Activated T-helper 2 cell treated with anti-CD3 and anti-CD28 coated beads, Interferon-gamma antibody, Interleukin-2, Interleukin-4, amounts not matched to agents 10 μg/mL and 5 μg/mL and 100 μg/mL, durations not matched to agents 14 hours and 24 hours and 36 hours (primary cell): ENCODE measurements at regions of chr7 and their contacts with region 1.

Region 1: GRCh38 chr7:102464577-102465280 is at the starts of genes ALKBH4 and LRWD1:
- DNase-seq: peak; percentile 92
- H3K4me3 Mint-ChIP-seq: peak within 1 kb of the TSS; percentile 90
- H3K27ac Mint-ChIP-seq: peak within 1 kb of the TSS; percentile 83
- H3K4me1 Mint-ChIP-seq: peaks cover 21% of the 10 kb centered on the region
- H3K27me3 Mint-ChIP-seq: no peaks in the 10 kb centered on the region
- total RNA-seq, gene ALKBH4: 8.9 and 10.0 TPM in 2 replicates
- total RNA-seq, gene LRWD1: 21.8 and 22.0 TPM in 2 replicates

Region 2: GRCh38 chr7:102396027-102397019 is 68.4 kb before region 1 on chr7 and contains the start of gene PRKRIP1:
- intact Hi-C with region 1: loop called (anchors 5 kb)
- DNase-seq: peak; percentile 80
- H3K4me3 Mint-ChIP-seq: peak within 1 kb of the TSS; percentile 92
- H3K27ac Mint-ChIP-seq: peak within 1 kb of the TSS; percentile 82
- H3K4me1 Mint-ChIP-seq: peaks cover 14% of the 10 kb centered on the region
- H3K27me3 Mint-ChIP-seq: no peaks in the 10 kb centered on the region
- total RNA-seq, gene PRKRIP1: 25.7 and 30.0 TPM in 2 replicates

Region 3: DNA sequence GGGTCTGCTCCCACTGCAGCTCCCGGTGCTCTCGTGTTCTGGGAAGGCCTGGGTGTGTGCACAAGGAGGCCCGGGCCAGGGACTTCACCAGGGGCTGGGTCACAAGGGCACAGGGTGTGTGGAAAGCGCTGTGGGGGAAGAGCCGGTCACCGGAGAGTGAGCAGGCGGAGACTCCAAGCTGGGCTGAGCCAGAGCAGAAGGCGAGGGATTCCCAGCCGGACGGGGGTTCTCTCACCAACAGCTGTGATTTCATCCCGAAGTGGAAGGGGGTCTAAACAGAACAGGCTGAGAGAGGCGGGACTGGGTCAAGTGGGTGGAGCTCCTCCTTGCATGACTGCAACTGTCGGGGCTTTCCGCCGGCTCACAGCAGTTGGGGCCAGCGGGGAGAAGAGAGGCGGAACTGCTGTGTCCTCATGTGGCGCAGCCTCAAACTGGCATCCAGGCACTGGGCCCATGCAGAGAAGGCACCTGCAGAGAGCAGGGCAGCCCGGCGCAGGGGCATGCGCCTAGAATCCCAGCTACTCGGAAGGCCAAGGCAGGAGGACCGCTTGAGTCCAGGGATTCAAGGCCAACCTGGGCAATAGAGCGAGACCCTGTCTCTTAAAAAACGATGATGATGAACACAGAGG is 39.0 kb before region 1 on chr7:
- intact Hi-C with region 1: loop called (anchors 1 kb)
- DNase-seq: peak; percentile 79
- H3K4me3 Mint-ChIP-seq: peak overlapping the region; percentile 68
- H3K27ac Mint-ChIP-seq: peak overlapping the region; percentile 100
- H3K4me1 Mint-ChIP-seq: peaks cover 55% of the 10 kb centered on the region
- H3K27me3 Mint-ChIP-seq: no peaks in the 10 kb centered on the region

Region 4: DNA sequence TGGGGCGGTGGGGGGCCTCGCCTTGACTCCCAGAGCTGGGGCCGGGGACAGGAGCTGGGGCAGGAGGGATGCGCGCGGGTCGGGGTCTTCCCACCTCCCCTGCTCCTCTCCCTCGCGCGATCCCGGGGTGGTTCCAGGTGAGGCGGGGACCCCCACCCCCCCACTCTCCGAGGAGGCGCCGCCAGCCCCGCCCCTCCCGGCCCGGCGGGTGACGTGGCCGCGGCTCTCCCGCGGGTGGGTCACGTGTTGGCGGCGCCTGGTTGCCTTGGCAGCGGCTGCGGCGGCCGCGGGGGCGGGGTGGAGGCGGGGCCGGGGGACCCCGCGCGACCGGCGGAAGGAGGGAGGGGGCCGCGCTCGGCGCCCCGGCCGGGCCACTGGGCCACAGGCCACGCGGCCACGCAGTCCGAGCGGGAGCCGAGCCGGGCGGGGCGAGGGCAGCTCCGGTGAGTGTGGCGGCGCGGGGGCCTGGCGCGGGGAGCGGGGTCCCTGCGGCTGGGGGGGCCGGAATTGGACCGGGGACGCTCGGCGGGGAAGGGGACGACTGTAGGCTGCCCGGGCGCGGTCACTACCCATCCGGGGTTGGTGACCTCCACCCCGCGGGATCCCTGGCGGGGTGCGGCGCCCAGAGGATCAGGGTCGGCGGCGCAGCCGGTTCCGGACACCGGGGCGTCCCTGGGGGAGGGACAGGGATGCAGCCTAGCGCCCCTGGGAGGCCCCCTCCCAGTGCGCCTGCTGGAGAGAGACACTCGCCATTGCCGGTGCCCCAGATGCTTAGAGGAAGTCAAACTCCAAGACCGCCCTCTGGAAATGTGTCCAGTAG is 31.3 kb before region 1 on chr7 and contains the start of gene ORAI2:
- intact Hi-C with region 1: loop called (anchors 1 kb)
- DNase-seq: peak; percentile 78
- H3K4me3 Mint-ChIP-seq: peak within 1 kb of the TSS; percentile 93
- H3K27ac Mint-ChIP-seq: peak within 1 kb of the TSS; percentile 89
- H3K4me1 Mint-ChIP-seq: peaks cover 34% of the 10 kb centered on the region
- H3K27me3 Mint-ChIP-seq: no peaks in the 10 kb centered on the region
- total RNA-seq, gene ORAI2: 53.5 and 53.8 TPM in 2 replicates